ENCODE measurements at regions of chr12 and their contacts with region 1.

Region 1: GRCh38 chr12:127381048-127381668 is 885.8 kb upstream of the TMEM132C start:
- DNase-seq: peak; percentile 53
- CTCF ChIP-seq: peak; percentile 77

Region 2: DNA sequence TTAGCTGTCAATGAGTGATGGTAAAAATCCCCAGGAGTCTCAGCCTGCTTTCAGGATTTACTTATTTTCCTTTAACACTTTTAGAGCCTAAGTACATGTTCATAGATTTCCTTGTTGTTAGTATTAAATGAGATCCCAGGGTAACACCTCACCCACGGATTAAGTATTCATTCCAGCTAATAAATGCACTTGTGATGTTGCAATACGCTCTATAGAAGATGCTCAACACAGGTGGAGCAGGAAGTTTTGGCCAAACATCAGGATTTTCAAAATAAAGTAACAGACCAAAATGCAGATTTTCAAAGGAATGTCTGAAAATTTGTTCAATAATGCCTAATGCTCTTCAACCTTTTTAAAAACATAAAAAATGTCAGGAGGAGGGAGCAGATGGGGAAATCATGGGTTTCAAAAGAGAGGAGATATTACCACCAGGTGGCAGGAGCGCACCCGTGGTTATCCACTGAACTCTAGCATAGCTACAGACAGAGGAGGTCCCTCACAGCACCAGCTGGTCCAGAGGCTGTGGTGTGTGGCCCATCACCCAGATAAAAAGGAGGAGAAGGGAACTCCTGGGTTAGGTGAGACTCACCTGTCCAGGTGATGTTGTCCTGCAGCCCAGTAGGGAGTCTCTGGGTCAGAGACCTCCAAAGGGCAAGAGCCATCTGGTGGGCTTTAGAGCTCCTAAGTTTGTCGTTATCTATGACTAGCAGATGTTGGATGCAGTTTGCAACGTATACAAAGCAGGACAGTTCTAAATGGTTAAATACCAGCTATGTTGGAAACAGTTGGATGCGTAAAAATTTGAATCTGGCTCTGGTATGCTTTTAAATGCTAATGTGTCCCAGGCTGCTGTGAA is 272.6 kb before region 1 on chr12:
- CTCF ChIA-PET with region 1: interaction called, 10 read pairs
- POLR2A ChIA-PET with region 1: no interaction called
- DNase-seq: peak; percentile 28
- CTCF ChIP-seq: peak; percentile 21

Region 3: DNA sequence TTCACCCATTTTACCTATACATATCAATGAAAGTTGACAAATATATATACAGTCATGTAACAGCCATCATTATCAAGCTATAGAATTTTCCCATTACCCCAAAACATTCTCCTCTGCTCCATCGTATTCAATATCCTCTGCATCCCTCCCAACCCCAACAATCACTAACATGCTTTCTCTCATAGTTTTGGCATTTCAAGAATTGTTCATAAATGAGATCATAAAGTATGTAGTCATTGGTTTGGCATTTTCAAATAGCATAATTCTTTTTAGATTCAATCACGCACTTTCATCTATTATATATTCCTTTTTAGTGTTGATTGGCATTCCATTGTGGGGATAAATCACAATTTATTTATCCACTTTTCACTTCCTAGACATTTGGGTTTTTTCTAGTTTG is 19.8 kb after region 1 on chr12:
- CTCF ChIA-PET with region 1: interaction called, 16 read pairs
- POLR2A ChIA-PET with region 1: no interaction called
- DNase-seq: no peak
- CTCF ChIP-seq: no peak